Lower leg skin (tissue), 4 donors: ENCODE measurements at regions of chr12 and their contacts with region 1.

Region 1: GRCh38 chr12:75553398-75553797 is 42.0 kb upstream of the KRR1 start:
- DNase-seq: no peak
- H3K4me3 ChIP-seq: no peak overlapping the region
- CTCF ChIP-seq: no peak
- POLR2A ChIP-seq: no peak

Region 2: GRCh38 chr12:75349946-75350345 is 203.5 kb before region 1 on chr12:
- intact Hi-C with region 1: no loop called
- DNase-seq: no peak
- H3K4me3 ChIP-seq: no peak overlapping the region
- CTCF ChIP-seq: no peak
- POLR2A ChIP-seq: no peak

Region 3: DNA sequence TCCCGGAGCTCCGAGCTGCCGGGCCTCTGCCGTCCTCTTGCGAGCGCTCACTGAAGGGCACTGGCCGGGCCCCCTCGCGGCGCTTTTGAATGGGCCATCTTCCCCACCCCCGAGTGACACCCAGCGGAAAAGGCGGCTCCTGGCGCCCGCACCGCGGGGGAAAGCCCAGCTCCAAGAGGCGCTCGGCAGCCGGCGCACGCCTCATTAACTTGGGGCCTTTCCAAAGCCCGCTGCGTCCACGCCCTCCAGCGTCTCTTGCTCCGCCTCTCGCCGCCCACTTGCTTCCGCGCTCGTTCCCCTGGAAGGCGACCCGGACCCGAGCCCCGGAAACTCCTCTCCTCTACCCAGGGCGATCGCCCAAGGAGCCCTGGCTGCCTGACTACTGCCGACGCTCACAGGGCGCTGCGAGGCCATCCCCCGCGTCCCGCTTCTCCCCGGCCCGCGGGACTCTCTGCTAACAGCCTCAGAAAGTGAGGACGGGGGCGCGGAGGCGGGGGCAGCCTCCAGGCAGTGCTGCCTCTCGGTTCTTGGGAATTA is 478.2 kb after region 1 on chr12 and contains the start of gene PHLDA1:
- intact Hi-C with region 1: loop called (anchors 10 kb)
- DNase-seq: peak; percentile 90 to 99
- H3K4me3 ChIP-seq: peak within 1 kb of the TSS; percentile 84
- CTCF ChIP-seq: peak in 1 of 3 donors; percentile 43
- POLR2A ChIP-seq: peak in 1 of 2 donors; percentile 74
- total RNA-seq, gene PHLDA1: 11.1 to 39.9 (median 19.6) TPM